Mammary epithelial cell (primary cell): ENCODE measurements at regions of chr2 and their contacts with region 1.

Region 1: GRCh38 chr2:170235860-170236679 is 58.1 kb downstream of the MYO3B start:
- DNase-seq: peak; percentile 50
- H3K4me3 ChIP-seq: no peak overlapping the region
- H3K27ac ChIP-seq: no peak overlapping the region
- H3K4me1 ChIP-seq: no peaks in the 10 kb centered on the region
- H3K27me3 ChIP-seq: peaks cover 5% of the 10 kb centered on the region
- CTCF ChIP-seq: peak; percentile 62 to 66

Region 2: DNA sequence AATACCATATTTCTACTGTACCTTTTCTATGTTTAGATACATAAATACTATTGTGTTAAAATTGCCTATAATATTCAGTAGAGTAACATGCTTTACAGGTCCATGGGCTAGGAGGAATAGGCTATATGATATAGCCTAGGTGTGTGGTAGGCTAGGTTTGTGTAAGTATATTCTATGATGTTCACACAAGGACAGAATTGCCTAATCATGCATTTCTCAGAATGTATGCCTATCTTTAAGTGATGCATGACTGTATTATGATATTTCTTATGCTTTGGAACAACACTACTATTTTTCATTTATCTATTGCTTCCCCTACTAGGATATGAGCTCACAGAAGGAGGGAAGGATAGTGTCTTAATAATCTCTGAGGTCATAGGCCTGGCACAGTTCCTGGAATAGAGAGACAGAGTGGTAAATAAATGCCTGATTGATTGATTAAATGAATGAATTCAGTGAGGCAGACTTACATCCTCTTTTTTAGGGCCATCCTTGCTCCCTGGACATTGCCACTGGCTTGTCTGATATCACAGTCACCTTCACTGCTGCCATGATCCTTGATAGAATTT is 62.9 kb after region 1 on chr2:
- CTCF ChIA-PET with region 1: interaction called, 27 read pairs
- dilution Hi-C with region 1: no loop called
- in situ Hi-C with region 1: no loop called
- intact Hi-C with region 1: no loop called
- DNase-seq: no peak
- H3K4me3 ChIP-seq: no peak overlapping the region
- H3K27ac ChIP-seq: no peak overlapping the region
- H3K4me1 ChIP-seq: no peaks in the 10 kb centered on the region
- H3K27me3 ChIP-seq: no peaks in the 10 kb centered on the region
- CTCF ChIP-seq: no peak

Region 3: DNA sequence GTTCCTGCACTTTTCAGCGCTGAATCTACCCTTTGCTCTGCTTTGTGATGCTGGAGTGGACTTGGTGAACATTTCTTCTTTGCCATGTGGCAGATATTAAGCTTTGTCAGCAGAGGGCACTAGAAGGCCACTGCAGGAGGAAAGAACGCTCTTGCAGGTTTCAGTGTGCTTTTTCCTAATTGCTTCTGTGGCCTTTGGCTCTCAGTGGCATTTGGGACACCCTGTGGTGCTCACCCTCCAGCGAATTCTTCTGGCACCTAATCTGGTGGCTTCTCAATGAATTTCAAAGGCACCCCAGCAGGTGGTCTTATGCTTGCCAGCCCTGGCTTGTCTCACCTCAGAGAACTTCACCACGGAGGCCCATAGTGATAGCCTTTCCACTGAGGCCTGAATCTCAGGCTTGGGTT is 88.6 kb after region 1 on chr2:
- CTCF ChIA-PET with region 1: no interaction called
- dilution Hi-C with region 1: no loop called
- in situ Hi-C with region 1: no loop called
- intact Hi-C with region 1: loop called (anchors 5 kb)
- DNase-seq: peak; percentile 39
- H3K4me3 ChIP-seq: no peak overlapping the region
- H3K27ac ChIP-seq: no peak overlapping the region
- H3K4me1 ChIP-seq: no peaks in the 10 kb centered on the region
- H3K27me3 ChIP-seq: no peaks in the 10 kb centered on the region
- CTCF ChIP-seq: peak; percentile 80 to 91

Region 4: DNA sequence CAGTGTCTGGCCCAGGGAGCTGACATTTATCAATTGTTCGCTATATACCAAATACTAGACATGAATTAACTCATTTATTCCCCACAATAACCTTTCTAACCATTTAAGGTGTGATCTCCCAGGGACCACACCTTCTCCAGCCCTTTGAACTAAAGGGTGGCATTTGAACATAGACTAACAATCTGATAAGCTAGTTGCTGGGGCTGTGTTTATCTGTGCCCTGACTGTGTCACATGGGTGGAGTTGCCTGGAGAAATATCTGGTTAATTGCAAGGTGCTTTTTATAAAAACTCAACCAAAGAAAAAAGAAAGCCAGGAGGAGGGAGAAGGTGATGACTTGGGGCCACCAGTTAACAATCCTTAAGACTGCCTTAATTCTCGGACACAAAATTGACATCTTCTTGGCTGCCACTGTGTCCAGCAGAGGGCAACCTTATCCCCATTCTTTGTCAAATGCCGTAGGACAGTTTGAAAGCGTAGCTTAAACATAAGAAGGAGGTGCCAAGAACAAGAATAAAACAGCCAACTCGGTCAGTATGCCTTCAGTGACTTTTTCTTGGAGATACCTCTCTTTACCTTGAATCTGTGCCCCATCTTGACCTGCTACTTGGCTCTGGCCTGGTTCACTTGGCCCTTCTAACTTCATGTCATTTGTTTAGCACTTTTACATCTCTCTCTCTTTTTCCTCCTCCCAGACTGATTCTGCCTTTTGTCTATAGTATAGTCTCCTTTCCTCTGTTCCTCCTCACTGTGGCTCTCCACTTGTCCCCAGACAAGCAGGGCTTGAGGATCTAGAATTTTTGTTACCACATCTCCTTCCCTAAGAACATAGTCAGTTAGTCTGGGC is 125.2 kb after region 1 on chr2:
- CTCF ChIA-PET with region 1: no interaction called
- dilution Hi-C with region 1: no loop called
- in situ Hi-C with region 1: no loop called
- intact Hi-C with region 1: loop called (anchors 1 kb)
- DNase-seq: peak; percentile 50
- H3K4me3 ChIP-seq: no peak overlapping the region
- H3K27ac ChIP-seq: no peak overlapping the region
- H3K4me1 ChIP-seq: no peaks in the 10 kb centered on the region
- H3K27me3 ChIP-seq: no peaks in the 10 kb centered on the region
- CTCF ChIP-seq: peak; percentile 79 to 87